H1 (cell line): ENCODE measurements at regions of chr10 and their contacts with region 1.

Region 1: DNA sequence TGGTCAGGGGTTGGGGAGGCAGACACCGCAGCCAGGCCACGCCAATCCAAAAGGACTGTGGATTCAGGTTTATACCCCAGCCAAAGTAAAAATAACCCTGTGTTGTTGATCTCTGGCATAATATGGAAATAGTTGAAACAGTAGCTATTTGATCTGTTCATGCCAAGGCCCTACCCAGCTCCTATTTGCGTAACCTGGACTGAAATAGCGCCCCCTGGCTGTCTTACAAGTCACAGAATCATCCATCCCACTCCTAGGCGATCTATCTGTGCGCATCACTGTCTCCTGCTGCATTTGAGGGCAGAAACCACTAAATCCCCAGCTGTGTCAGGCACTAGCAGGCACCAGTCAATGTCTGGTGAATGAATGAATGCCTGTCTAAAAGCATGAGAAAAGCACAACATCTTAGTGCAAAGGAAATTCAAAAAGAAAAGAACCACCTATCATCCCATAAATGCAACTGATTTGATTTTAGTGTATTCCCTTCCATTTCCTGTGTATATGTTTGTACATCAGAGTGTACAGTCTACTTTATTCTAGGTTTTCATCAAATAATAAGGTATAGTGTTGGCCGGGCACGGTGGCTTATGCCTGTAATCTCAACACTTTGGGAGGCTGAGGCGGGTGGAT is 160.0 kb downstream of the SLIT1 start:
- DNase-seq: peak in 1 of 2 experiments; percentile 76
- H3K4me3 ChIP-seq: no peak overlapping the region
- H3K27ac ChIP-seq: no peak overlapping the region
- H3K4me1 ChIP-seq: peaks cover 0 to 6% (median 4%) of the 10 kb centered on the region in 4 experiments; a peak in 4 of 7 replicates
- H3K27me3 ChIP-seq: no peaks in the 10 kb centered on the region
- CTCF ChIP-seq: peak; percentile 80 to 91 (median 82)
- EP300 ChIP-seq: no peak
- POLR2A ChIP-seq: no peak
- RAD21 ChIP-seq: peak; percentile 64 to 67

Region 2: DNA sequence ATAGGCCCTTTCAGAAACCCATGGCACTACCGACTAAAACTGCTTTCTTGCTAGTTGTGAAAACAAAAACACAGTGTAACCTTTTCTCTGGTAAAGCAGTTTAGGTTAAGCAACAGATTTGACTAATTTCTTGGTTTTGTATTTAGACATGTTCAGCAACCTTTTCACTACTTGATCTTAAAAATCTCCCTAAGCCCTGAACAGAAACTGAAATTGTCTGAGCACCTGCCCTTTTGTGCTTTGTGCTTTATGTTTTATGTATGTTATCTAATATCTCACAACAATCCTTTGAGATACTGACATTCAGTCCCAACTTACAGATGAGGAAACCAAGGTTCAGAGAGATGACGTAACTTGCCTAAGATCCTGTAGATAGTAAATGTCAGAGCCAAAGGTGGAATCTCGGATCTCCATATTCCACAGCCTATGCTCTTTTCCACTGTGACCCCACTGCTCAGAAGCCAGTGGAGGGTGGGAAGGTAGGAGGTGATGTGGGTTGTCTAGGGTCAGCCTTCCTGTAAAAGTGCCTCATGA is 47.0 kb before region 1 on chr10:
- CTCF ChIA-PET with region 1: interaction called, 25 read pairs
- POLR2A ChIA-PET with region 1: no interaction called
- DNase-seq: no peak
- H3K4me3 ChIP-seq: no peak overlapping the region
- H3K27ac ChIP-seq: no peak overlapping the region
- H3K4me1 ChIP-seq: no peaks in the 10 kb centered on the region; a peak in 1 of 7 replicates
- H3K27me3 ChIP-seq: no peaks in the 10 kb centered on the region
- CTCF ChIP-seq: no peak
- EP300 ChIP-seq: no peak
- POLR2A ChIP-seq: no peak
- RAD21 ChIP-seq: no peak

Region 3: GRCh38 chr10:96998329-96998888 is 27.3 kb before region 1 on chr10:
- CTCF ChIA-PET with region 1: interaction called, 47 read pairs
- POLR2A ChIA-PET with region 1: no interaction called
- DNase-seq: no peak
- H3K4me3 ChIP-seq: no peak overlapping the region
- H3K27ac ChIP-seq: no peak overlapping the region
- H3K4me1 ChIP-seq: no peaks in the 10 kb centered on the region
- H3K27me3 ChIP-seq: no peaks in the 10 kb centered on the region
- CTCF ChIP-seq: no peak
- EP300 ChIP-seq: no peak
- POLR2A ChIP-seq: no peak
- RAD21 ChIP-seq: no peak

Region 4: GRCh38 chr10:97037365-97038361 is 11.9 kb after region 1 on chr10:
- CTCF ChIA-PET with region 1: interaction called, 129 read pairs
- POLR2A ChIA-PET with region 1: interaction called, 3 read pairs
- DNase-seq: peak; percentile 83 to 94
- H3K4me3 ChIP-seq: peak overlapping the region in 2 of 4 experiments; percentile 17 to 25; a peak in 2 of 8 replicates
- H3K27ac ChIP-seq: no peak overlapping the region
- H3K4me1 ChIP-seq: peaks cover under 1 to 7% (median 4%) of the 10 kb centered on the region in 4 experiments; a peak in 6 of 7 replicates
- H3K27me3 ChIP-seq: no peaks in the 10 kb centered on the region; a peak in 1 of 7 replicates
- CTCF ChIP-seq: peak; percentile 90 to 93 (median 90)
- EP300 ChIP-seq: no peak
- POLR2A ChIP-seq: no peak
- RAD21 ChIP-seq: peak; percentile 81 to 90